ENCODE measurements at regions of chr17 and their contacts with region 1.

Region 1: DNA sequence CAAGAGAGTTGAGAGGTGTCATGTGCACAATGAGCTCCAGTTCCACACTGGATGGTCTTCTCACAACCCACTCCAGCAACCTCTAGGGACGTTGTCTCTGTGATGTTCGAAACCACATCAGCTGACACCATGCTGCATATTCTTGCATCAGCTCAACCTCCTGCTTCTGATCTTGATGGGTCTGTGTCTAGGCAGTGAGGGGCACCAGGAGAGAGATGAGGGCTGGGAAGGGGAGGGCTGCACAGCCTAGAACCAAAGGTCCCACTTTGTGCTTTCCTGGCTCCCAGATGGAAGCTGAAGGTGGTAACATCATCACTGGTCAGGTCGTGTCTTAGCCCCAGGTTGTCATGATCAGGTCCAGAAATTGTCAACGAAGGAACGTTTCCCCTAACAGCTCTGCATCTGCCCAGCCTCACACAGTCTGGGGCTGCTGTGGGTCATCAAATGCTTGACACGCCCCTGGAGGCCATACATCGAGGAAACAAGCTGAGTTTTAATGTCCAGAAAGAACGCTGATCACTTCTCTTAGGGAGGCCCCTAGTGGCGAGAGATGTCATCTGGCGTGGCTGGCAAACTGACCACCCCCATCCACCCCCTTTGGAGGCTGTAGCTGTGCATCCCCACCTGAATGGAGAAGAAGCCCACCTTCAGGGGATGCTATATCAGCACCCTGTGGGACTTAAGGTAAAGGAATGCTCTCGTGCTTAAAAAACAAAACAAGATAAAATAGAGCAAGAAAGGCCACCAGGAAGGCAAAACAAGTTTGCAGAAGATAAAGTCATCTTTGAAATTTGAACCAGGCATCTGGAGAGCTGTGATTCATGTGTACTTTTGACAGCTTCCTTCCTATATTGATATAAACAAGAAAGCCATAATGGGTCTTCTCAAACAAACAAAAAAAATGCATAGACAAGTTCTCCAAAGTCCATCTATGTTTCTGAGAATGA is 58.3 kb downstream of the WIPI1 start:
- DNase-seq: peak; percentile 50
- H3K4me3 ChIP-seq: no peak overlapping the region
- H3K27ac ChIP-seq: no peak overlapping the region
- H3K27me3 ChIP-seq: no peaks in the 10 kb centered on the region
- CTCF ChIP-seq: peak; percentile 90

Region 2: DNA sequence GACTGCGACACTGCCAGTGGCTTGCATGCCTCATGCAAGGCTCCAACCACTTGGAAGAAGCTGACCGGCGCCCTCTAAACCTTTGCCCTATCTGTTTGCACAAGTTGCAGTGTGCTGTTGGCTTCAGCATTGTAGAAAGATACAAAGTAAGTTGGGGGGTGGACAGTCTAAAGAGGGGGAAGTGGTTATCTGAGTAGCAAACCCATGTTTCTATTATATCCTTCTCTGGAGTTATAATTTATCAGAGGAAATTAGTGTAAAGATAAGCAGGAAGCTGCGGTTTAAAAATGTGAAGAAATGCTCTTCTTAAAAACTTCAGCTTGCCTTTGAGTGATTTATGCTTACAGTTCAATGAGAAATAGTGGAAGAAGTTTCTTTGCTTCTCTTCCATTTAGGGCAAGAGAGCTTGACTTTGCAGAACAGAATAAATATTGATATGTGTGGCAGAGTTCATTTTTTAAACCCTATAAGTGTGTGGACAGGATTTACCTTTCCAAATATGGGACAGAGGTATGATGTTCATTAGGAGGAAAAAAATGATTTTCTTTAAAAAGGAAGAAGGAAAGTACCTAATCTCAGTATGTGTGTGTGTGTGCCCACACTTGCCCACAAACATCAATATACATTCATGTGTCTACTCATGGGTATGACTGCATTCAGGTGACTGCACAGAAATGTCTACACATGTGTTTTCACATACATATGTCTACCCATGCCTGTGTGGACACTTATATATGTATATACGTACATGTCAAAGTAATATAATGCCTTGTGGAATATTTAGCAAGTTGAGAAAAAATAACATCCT is 143.0 kb before region 1 on chr17:
- CTCF ChIA-PET with region 1: interaction called, 72 read pairs
- POLR2A ChIA-PET with region 1: no interaction called
- DNase-seq: no peak
- H3K4me3 ChIP-seq: no peak overlapping the region
- H3K27ac ChIP-seq: no peak overlapping the region
- H3K27me3 ChIP-seq: no peaks in the 10 kb centered on the region
- CTCF ChIP-seq: no peak

Region 3: DNA sequence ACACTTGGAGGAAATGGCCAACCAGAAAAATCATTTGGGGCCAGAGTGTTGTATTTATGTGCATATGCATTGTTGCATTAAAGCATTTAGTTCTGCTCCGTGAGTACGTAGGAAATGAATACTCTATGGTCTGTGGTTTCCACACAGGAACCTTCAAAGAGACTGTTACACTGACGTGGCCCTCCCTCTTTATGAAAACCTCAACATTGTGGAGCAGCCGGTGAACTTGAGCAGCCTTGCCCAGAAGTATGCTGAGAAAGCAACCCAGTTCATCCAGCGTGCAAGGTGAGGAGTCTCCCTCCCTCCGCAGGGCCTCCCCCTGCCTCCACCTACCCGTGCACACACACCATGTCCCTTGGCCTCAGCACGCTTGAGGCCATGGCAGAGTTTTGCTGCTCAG is 42.4 kb before region 1 on chr17:
- CTCF ChIA-PET with region 1: interaction called, 11 read pairs
- POLR2A ChIA-PET with region 1: interaction called, 9 read pairs
- DNase-seq: no peak
- H3K4me3 ChIP-seq: no peak overlapping the region
- H3K27ac ChIP-seq: no peak overlapping the region
- H3K27me3 ChIP-seq: no peaks in the 10 kb centered on the region
- CTCF ChIP-seq: no peak

Region 4: GRCh38 chr17:68418876-68419275 is 19.9 kb after region 1 on chr17:
- CTCF ChIA-PET with region 1: interaction called, 29 read pairs
- POLR2A ChIA-PET with region 1: no interaction called
- DNase-seq: no peak
- H3K4me3 ChIP-seq: no peak overlapping the region
- H3K27ac ChIP-seq: no peak overlapping the region
- H3K27me3 ChIP-seq: no peaks in the 10 kb centered on the region
- CTCF ChIP-seq: no peak

Region 5: GRCh38 chr17:68435876-68436842 is 37.2 kb after region 1 on chr17:
- CTCF ChIA-PET with region 1: interaction called, 19 read pairs
- POLR2A ChIA-PET with region 1: interaction called, 4 read pairs
- DNase-seq: peak; percentile 52
- H3K4me3 ChIP-seq: no peak overlapping the region
- H3K27ac ChIP-seq: peak overlapping the region; percentile 31
- H3K27me3 ChIP-seq: no peaks in the 10 kb centered on the region
- CTCF ChIP-seq: peak; percentile 94

Region 6: GRCh38 chr17:68670967-68671693 is 272.2 kb after region 1 on chr17:
- CTCF ChIA-PET with region 1: no interaction called
- POLR2A ChIA-PET with region 1: no interaction called
- DNase-seq: no peak
- H3K4me3 ChIP-seq: no peak overlapping the region
- H3K27ac ChIP-seq: no peak overlapping the region
- H3K27me3 ChIP-seq: peaks cover 2% of the 10 kb centered on the region
- CTCF ChIP-seq: no peak

Measured in AG04450 (cell line).